Gastrocnemius medialis (tissue), 4 donors: ENCODE measurements at regions of chr6 and their contacts with region 1.

Region 1: DNA sequence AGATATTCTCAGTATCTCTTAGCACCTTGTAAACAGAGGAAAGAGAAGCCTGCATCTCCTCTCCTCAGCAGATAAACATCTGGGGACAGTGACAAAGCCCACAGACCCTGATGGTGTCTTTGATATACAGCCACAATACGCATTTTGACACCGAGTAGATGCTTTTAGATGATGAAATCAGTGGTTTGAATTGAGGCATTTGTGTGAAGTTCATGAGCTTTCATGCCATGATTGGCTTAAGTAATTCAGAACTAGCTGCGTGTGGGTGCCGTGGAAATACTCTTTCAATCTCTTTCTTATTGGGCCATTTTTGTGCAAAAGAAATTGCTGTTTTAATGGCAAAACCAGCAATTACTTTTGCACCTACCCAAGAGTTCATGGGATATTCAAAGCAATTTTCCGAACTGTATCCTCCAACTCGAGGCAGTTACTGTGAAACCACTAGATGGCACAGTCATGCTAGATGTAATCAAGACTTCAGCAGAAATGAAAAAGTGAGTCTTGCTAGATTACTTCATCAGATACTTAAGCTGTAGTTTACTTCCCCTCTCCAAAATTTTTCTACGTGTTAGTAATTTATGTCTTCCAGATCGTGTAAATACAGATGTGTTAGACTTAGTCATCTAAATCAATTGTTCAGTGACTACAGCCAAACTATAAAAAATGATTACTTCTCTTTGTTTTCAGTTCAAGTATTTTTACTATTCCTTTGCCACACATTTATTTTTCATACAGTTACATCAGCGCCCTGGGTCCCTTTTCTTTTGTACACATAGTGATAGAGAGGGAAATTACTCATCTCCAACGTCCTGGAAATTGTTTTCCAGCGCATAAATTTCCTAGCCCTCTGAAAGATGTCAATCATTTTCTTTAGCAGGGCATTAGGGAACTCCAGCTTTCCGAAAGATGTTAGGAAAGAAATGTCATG is 49.4 kb downstream of the IYD start:
- DNase-seq: no peak
- ATAC-seq: peak; percentile 72 to 77
- H3K4me3 ChIP-seq: peak overlapping the region; percentile 44 to 56 (median 48)
- H3K27ac ChIP-seq: peak overlapping the region; percentile 27 to 64 (median 56)
- H3K4me1 ChIP-seq: peaks cover 0 to 6% of the 10 kb centered on the region in 2 donors
- H3K27me3 ChIP-seq: no peaks in the 10 kb centered on the region
- CTCF ChIP-seq: peak; percentile 35 to 68 (median 47)
- POLR2A ChIP-seq: no peak

Region 2: DNA sequence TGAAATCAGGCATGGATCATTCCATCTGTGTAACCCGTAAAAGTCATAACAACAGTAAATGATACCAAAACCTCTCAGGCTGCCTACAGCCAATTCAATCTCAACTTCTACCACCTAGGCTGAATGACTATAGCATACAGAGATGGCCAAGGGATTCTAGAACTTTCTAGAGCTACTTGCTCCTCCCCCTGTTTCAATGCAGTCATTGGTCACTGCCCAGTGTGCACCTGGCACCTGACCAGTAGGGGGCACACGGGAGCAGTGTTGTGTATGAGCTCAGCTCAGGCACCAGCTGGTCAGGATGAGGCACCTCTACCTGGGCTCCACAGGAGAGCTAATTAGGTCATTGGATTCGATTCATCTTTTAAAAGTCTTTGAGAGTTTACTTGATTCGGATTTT is 267.7 kb after region 1 on chr6:
- in situ Hi-C with region 1: no loop called
- intact Hi-C with region 1: loop called (anchors 10 kb)
- DNase-seq: no peak
- ATAC-seq: no peak
- H3K4me3 ChIP-seq: peak overlapping the region in 1 of 4 donors; percentile 53
- H3K27ac ChIP-seq: peak overlapping the region; percentile 56 to 79 (median 74)
- H3K4me1 ChIP-seq: peaks cover 6 to 7% of the 10 kb centered on the region in 2 donors
- H3K27me3 ChIP-seq: no peaks in the 10 kb centered on the region
- CTCF ChIP-seq: peak in 4 of 5 experiments; percentile 19 to 41 (median 38)
- POLR2A ChIP-seq: no peak

Region 3: DNA sequence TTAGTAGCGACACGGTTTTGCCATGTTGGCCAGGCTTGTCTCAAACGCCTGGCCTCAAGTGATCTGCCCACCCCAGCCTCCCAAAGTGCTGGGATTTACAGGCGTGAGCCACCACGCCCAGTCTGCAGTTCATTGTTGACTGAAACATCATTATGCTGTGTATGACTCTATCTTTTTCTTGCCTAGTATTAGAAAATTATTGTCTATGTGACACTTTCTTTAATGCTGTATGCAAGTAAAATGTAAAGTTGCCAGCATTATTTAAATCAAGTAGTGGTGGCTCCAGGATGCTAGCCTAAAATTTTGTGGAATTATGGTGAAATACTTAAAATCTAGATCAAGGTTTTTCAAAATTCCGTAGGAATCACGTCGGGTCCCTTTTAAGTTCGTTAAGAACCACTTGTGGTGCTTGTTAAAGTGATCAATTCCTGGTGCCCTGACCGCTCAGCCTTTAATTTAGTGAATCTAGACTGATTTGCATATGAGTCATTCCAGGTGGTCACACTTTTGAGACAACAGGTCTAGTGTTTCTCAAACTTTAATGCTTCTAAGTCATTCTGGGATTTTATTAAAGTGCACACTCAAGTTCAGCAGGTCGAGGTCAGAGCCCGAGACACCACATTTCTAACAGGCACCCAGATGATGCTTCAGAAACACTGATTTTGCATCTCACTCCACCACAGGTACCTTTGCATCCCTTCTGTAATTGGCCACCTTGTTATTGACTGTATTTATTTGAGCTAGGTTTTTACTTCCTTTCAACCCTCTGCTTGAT is 314.8 kb after region 1 on chr6:
- in situ Hi-C with region 1: loop called in 1 of 4 experiments (anchors 10 kb)
- intact Hi-C with region 1: no loop called
- DNase-seq: no peak
- ATAC-seq: no peak
- H3K4me3 ChIP-seq: no peak overlapping the region
- H3K27ac ChIP-seq: no peak overlapping the region
- H3K4me1 ChIP-seq: no peaks in the 10 kb centered on the region
- H3K27me3 ChIP-seq: no peaks in the 10 kb centered on the region
- CTCF ChIP-seq: no peak
- POLR2A ChIP-seq: no peak

Region 4: GRCh38 chr6:150928882-150929281 is 510.7 kb after region 1 on chr6:
- in situ Hi-C with region 1: no loop called
- intact Hi-C with region 1: no loop called
- DNase-seq: no peak
- ATAC-seq: no peak
- H3K4me3 ChIP-seq: no peak overlapping the region
- H3K27ac ChIP-seq: no peak overlapping the region
- H3K4me1 ChIP-seq: peaks cover 0 to 6% of the 10 kb centered on the region in 2 donors
- H3K27me3 ChIP-seq: no peaks in the 10 kb centered on the region
- CTCF ChIP-seq: no peak
- POLR2A ChIP-seq: no peak